ENCODE measurements at regions of chr16 and their contacts with region 1.

Region 1: DNA sequence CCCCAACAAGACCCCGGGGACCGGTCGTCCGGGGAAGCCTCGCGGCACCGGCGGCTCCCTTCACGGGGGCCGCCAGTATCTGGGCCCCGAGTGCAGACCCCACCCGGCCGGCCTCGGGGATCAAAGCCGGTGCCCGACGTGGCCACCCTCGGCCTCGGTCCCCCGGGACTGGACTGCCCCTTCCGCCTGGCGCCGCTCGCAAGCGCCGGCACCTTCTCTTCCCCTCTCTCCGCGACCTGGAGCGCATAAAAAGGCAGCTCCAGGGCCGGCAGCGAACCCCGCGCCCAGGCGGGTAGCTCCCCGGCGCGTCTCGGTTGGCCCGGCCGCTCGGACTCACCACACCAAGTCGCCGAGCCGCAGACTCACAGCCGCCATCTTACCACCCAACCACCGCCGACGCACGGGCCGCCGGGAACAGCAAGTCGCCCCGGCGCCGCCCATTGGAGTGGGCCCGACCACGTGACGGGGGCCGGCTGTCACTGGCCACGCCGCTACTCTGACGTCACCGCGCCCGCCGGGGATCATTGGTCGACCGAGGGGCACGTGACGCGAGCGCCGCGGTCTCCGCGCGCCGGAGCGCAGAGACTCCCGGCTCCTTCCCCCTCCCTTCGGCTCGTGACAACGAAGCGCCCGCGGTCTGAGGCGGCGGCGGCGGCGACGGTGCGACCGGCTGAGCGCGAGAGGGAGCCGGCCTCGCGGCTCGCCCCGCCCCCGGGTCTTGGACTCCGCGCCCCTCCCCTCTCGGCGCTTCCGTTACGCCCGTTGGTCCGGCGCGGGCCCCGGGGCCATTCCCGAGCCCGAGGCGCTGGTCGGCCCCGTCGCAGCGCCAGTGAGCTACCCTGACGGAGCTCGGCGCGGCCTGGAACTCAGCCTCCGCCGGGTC is at the starts of genes GLYR1 and UBN1:
- DNase-seq: peak; percentile 100
- ATAC-seq: peak; percentile 88
- H3K4me3 Mint-ChIP-seq: peak within 1 kb of the TSS; percentile 90
- H3K27ac Mint-ChIP-seq: peak within 1 kb of the TSS; percentile 92
- H3K4me1 Mint-ChIP-seq: peaks cover 51% of the 10 kb centered on the region
- H3K27me3 Mint-ChIP-seq: no peaks in the 10 kb centered on the region
- CTCF ChIP-seq: no peak
- total RNA-seq, gene GLYR1: 138 and 156 TPM in 2 replicates
- total RNA-seq, gene UBN1: 33.4 and 36.1 TPM in 2 replicates

Region 2: GRCh38 chr16:4506450-4506849 is 340.7 kb before region 1 on chr16:
- CTCF ChIA-PET with region 1: no interaction called
- POLR2A ChIA-PET with region 1: no interaction called
- intact Hi-C with region 1: loop called (anchors 5 kb)
- DNase-seq: peak; percentile 31
- ATAC-seq: peak; percentile 39
- H3K4me3 Mint-ChIP-seq: peak overlapping the region; percentile 29
- H3K27ac Mint-ChIP-seq: peak overlapping the region; percentile 93
- H3K4me1 Mint-ChIP-seq: peaks cover 40% of the 10 kb centered on the region
- H3K27me3 Mint-ChIP-seq: no peaks in the 10 kb centered on the region
- CTCF ChIP-seq: peak; percentile 46

Region 3: DNA sequence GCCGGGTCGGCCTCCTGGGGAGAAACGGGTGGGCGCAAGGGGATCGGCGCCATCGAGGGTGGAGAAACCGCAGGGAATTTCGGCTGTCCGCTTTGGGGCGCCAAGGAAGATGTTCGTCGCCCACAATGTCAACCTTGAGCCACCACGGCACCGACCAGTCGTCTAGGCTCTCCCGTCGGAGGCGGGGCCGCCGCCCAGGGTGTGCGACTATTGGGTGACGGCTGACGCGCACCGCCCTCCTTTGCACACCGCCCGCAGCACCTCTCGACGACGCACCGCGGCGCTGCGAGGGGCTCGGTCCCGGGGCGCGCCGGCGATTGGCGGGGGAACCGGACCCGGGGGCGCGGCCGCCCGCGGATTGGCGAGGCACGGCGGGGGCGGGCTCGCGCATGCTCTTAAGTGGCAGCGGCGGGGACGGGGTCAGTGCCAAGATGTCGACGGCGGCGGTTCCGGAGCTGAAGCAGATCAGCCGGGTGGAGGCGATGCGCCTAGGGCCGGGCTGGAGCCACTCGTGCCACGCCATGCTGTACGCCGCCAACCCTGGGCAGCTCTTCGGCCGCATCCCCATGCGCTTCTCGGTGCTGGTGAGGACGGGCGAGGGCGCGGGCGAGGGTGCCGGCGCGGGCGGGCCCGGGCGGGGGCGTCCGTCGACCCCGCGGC is 153.7 kb before region 1 on chr16 and contains the start of gene NUDT16L1:
- CTCF ChIA-PET with region 1: no interaction called
- POLR2A ChIA-PET with region 1: no interaction called
- intact Hi-C with region 1: loop called (anchors 1 kb)
- DNase-seq: peak; percentile 98
- ATAC-seq: peak; percentile 96
- H3K4me3 Mint-ChIP-seq: peak within 1 kb of the TSS; percentile 85
- H3K27ac Mint-ChIP-seq: peak within 1 kb of the TSS; percentile 69
- H3K4me1 Mint-ChIP-seq: peaks cover 9% of the 10 kb centered on the region
- H3K27me3 Mint-ChIP-seq: no peaks in the 10 kb centered on the region
- CTCF ChIP-seq: no peak
- total RNA-seq, gene NUDT16L1: 32.0 and 32.9 TPM in 2 replicates

Region 4: GRCh38 chr16:4766874-4767628 is 80.1 kb before region 1 on chr16 and contains the start of gene ZNF500:
- CTCF ChIA-PET with region 1: no interaction called
- POLR2A ChIA-PET with region 1: no interaction called
- intact Hi-C with region 1: loop called (anchors 1 kb)
- DNase-seq: peak; percentile 97
- ATAC-seq: peak; percentile 91
- H3K4me3 Mint-ChIP-seq: peak within 1 kb of the TSS; percentile 93
- H3K27ac Mint-ChIP-seq: peak within 1 kb of the TSS; percentile 91
- H3K4me1 Mint-ChIP-seq: peaks cover 24% of the 10 kb centered on the region
- H3K27me3 Mint-ChIP-seq: no peaks in the 10 kb centered on the region
- CTCF ChIP-seq: no peak
- total RNA-seq, gene ZNF500: 14.3 and 19.1 TPM in 2 replicates

Region 5: GRCh38 chr16:4833357-4833983 is 13.7 kb before region 1 on chr16:
- CTCF ChIA-PET with region 1: no interaction called
- POLR2A ChIA-PET with region 1: interaction called, 14 read pairs
- intact Hi-C with region 1: no loop called
- DNase-seq: no peak
- ATAC-seq: peak; percentile 25
- H3K4me3 Mint-ChIP-seq: no peak overlapping the region
- H3K27ac Mint-ChIP-seq: no peak overlapping the region
- H3K4me1 Mint-ChIP-seq: peaks cover 18% of the 10 kb centered on the region
- H3K27me3 Mint-ChIP-seq: no peaks in the 10 kb centered on the region
- CTCF ChIP-seq: no peak

Region 6: GRCh38 chr16:5071681-5072333 is 224.7 kb after region 1 on chr16 and contains the start of gene ALG1:
- CTCF ChIA-PET with region 1: no interaction called
- POLR2A ChIA-PET with region 1: no interaction called
- intact Hi-C with region 1: loop called (anchors 5 kb)
- DNase-seq: peak; percentile 86
- ATAC-seq: peak; percentile 91
- H3K4me3 Mint-ChIP-seq: peak within 1 kb of the TSS; percentile 96
- H3K27ac Mint-ChIP-seq: peak within 1 kb of the TSS; percentile 94
- H3K4me1 Mint-ChIP-seq: peaks cover 25% of the 10 kb centered on the region
- H3K27me3 Mint-ChIP-seq: peaks cover 3% of the 10 kb centered on the region
- CTCF ChIP-seq: no peak
- total RNA-seq, gene ALG1: 25.8 and 28.2 TPM in 2 replicates

Measured in activated B cell treated with CpG ODN at 0.5 μM for 24 hours (primary cell).